ENCODE measurements at regions of chr5 and their contacts with region 1.

Region 1: DNA sequence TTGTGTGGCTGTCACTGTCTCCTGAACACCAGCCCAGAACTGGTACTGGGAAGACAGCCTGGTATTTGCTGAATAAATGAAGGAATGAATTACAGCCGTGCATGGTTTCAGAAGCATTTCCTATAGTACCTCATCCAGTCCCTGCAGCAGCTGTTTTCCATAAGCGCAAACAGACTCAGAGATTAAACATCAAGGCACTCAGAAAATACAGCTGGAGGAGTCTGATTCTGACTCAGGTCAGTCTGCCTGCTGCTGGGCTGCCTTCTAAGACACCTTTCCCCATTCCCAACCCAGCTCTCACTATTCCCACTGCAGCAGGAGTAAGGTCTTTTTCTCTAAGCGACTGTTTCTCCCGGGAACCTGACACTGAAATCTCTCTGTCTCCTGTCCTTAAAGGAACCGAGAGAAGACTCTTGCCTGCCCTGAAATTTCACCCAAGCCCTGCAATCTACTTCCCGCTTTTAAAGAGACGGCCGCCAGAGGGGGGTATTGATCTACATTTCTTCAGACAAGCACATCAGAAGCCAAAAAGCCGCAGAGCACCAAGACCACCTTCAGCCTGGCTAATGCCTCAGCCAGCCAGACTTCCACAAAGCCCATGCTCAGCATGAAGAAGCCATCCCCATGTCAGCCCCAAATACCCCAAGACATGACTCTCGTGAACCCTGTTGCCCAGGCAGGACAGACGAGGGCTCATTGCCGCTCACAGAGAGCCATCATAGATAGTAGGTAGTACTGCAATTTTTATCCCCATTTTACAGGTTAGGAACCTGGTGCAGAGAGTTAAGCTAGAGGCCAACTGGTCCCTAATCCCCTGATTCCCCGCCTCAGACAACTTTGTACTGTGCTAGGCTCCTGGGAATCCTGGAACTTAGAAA is 5.4 kb upstream of the FOXI1 start:
- DNase-seq: peak; percentile 78
- H3K4me3 ChIP-seq: no peak overlapping the region
- H3K27ac ChIP-seq: no peak overlapping the region
- H3K4me1 ChIP-seq: peaks cover 0 to 2% of the 10 kb centered on the region in 2 experiments; a peak in 1 of 4 replicates
- H3K27me3 ChIP-seq: no peaks in the 10 kb centered on the region
- CTCF ChIP-seq: peak; percentile 83
- EP300 ChIP-seq: no peak
- RAD21 ChIP-seq: peak; percentile 93

Region 2: DNA sequence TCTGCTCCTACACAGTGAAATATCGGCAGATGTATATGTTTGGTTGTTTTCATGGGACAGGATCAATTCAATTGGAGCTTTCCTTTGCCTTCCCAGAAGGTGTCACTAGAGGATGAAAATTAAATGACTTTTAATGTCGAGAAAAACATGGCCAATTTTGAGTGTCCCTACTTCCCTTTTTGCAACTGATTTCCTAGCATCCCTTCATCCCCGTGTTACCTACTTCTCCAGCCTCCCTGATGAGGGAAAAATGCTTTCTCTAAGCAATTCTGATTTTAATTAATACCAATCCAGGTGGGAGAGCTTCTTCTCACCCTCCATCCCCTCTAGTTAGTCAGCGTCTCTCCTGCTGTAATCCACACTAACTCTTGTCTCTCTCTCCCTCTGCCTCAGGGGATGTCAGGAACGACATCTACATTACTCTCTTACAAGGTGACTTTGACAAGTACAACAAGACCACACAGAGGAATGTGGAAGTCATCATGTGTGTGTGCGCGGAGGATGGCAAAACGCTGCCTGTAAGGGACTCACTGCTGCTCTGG is 398.3 kb before region 1 on chr5:
- CTCF ChIA-PET with region 1: interaction called, 25 read pairs
- POLR2A ChIA-PET with region 1: no interaction called
- DNase-seq: peak; percentile 37
- H3K4me3 ChIP-seq: no peak overlapping the region; a peak in 1 of 4 replicates
- H3K27ac ChIP-seq: peak overlapping the region in 1 of 2 experiments; percentile 6; a peak in 1 of 4 replicates
- H3K4me1 ChIP-seq: peaks cover 3 to 31% of the 10 kb centered on the region in 2 experiments; a peak in 3 of 4 replicates
- H3K27me3 ChIP-seq: no peaks in the 10 kb centered on the region
- CTCF ChIP-seq: peak; percentile 74
- EP300 ChIP-seq: no peak
- RAD21 ChIP-seq: peak; percentile 87

Region 3: DNA sequence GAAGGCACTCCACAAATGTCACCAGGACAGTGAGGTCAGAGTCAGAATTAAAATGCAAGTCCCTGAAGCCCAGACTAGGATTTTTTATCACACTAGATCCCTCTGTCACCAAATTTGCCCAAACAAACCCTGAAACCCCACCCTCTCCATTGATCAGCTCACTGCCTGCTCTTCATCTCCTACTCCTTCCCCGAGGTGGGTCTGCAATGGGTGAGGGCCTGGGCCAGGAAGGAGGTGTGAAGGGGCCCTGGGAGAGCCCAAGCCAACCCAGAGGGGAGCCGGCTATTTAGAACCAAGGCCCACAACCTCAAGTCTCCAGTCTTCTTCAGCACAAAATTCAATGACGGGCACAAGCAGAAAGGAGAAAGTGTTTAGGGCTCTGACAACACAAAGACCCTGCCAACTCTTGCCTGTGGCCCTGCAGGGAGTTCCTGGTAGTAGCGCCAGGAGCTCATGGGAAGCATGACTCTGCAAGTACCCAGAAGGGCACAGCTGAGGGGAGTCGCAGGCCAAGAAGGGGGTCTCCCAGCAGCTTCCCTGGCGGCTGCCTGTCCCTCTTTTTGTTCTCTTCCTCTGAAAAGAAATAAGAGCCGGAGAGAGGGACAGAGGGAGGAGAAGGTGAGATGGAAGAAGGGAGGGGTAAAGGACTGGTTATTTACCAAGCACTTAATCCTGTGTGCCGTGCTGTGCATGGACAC is 10.9 kb after region 1 on chr5:
- CTCF ChIA-PET with region 1: interaction called, 33 read pairs
- POLR2A ChIA-PET with region 1: no interaction called
- DNase-seq: no peak
- H3K4me3 ChIP-seq: no peak overlapping the region
- H3K27ac ChIP-seq: no peak overlapping the region
- H3K4me1 ChIP-seq: no peaks in the 10 kb centered on the region; a peak in 1 of 4 replicates
- H3K27me3 ChIP-seq: no peaks in the 10 kb centered on the region; the same call in 1 of the 2 replicates
- CTCF ChIP-seq: no peak
- EP300 ChIP-seq: no peak
- RAD21 ChIP-seq: no peak

Region 4: DNA sequence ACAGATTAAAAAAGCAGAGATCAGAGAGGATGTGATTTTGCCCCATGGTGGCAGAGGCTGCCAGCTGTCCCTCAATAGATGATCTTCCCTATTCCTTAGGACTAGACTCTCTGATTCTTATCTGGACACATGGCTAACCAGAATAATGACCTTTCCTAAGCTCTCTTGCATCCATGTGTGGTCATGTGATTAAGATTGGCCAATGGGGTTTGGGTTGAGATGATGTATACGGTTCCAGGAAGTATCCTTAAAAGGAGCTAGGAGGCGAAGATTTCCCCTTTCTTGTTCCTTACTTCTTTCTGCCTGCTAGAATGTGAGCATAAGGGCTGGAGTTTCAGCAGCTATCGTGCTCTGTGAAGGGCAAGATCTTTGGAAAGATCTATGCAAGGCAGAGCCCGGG is 45.2 kb after region 1 on chr5:
- CTCF ChIA-PET with region 1: interaction called, 12 read pairs
- POLR2A ChIA-PET with region 1: no interaction called
- DNase-seq: no peak
- H3K4me3 ChIP-seq: no peak overlapping the region
- H3K27ac ChIP-seq: no peak overlapping the region
- H3K4me1 ChIP-seq: no peaks in the 10 kb centered on the region
- H3K27me3 ChIP-seq: no peaks in the 10 kb centered on the region
- CTCF ChIP-seq: no peak
- EP300 ChIP-seq: no peak
- RAD21 ChIP-seq: no peak

Region 5: GRCh38 chr5:170183816-170184687 is 83.7 kb after region 1 on chr5:
- CTCF ChIA-PET with region 1: interaction called, 201 read pairs
- POLR2A ChIA-PET with region 1: interaction called, 3 read pairs
- DNase-seq: peak; percentile 74
- H3K4me3 ChIP-seq: no peak overlapping the region
- H3K27ac ChIP-seq: peak overlapping the region in 1 of 2 experiments; percentile 85; a peak in 1 of 4 replicates
- H3K4me1 ChIP-seq: peaks cover 0 to 24% of the 10 kb centered on the region in 2 experiments; a peak in 2 of 4 replicates
- H3K27me3 ChIP-seq: no peaks in the 10 kb centered on the region
- CTCF ChIP-seq: peak; percentile 87
- EP300 ChIP-seq: no peak
- RAD21 ChIP-seq: peak; percentile 90

Region 6: GRCh38 chr5:170195961-170196360 is 95.7 kb after region 1 on chr5:
- CTCF ChIA-PET with region 1: interaction called, 44 read pairs
- POLR2A ChIA-PET with region 1: no interaction called
- DNase-seq: no peak
- H3K4me3 ChIP-seq: no peak overlapping the region
- H3K27ac ChIP-seq: no peak overlapping the region
- H3K4me1 ChIP-seq: peaks cover 0 to 11% of the 10 kb centered on the region in 2 experiments; a peak in 1 of 4 replicates
- H3K27me3 ChIP-seq: peaks cover 4% of the 10 kb centered on the region; the same call in 1 of the 2 replicates
- CTCF ChIP-seq: no peak
- EP300 ChIP-seq: no peak
- RAD21 ChIP-seq: no peak